CD8-positive, alpha-beta T cell (primary cell): ENCODE measurements at regions of chr10 and their contacts with region 1.

Region 1: DNA sequence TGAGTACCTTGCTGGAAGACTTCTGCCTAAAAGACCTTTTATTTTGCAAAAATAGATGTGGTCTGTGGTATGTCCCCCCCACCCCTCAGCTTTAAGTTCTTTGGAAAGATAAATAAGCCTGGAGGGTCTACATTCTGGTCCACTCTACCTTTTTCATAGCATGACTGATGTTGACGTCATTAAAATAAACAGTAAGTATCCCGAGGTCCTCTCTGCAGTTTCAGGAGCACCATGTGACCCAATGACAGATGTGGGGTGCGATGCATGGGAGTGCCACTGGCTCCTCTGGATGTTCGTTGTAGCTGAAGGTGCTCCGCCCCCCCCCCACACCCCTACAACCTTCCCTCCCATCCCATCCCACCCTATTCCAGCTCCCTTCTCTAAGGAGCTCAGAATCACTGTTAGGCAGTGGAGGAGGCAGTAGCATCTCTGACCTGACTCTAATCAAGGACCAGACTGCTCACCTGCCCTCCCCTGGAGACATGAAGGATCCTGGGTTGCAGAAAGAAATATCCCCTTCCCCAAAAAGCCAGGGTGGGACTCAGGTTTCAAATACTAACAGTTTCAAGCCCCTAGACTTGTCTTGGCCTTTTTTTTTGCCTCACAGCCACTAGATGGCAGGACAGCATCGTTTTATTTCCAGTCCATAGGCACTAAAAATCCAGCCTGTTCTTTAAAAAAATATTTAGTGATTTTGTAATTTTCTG is 25.1 kb downstream of the CASP7 start:
- DNase-seq: peak in 2 of 9 experiments; percentile 37 to 51
- ATAC-seq: no peak
- H3K4me3 ChIP-seq: no peak overlapping the region
- H3K4me3 Mint-ChIP-seq: no peak overlapping the region
- H3K27ac ChIP-seq: no peak overlapping the region
- H3K27ac Mint-ChIP-seq: no peak overlapping the region
- H3K4me1 ChIP-seq: no peaks in the 10 kb centered on the region
- H3K4me1 Mint-ChIP-seq: peaks cover 32% of the 10 kb centered on the region
- H3K27me3 ChIP-seq: no peaks in the 10 kb centered on the region
- H3K27me3 Mint-ChIP-seq: no peaks in the 10 kb centered on the region
- CTCF ChIP-seq: peak; percentile 50

Region 2: DNA sequence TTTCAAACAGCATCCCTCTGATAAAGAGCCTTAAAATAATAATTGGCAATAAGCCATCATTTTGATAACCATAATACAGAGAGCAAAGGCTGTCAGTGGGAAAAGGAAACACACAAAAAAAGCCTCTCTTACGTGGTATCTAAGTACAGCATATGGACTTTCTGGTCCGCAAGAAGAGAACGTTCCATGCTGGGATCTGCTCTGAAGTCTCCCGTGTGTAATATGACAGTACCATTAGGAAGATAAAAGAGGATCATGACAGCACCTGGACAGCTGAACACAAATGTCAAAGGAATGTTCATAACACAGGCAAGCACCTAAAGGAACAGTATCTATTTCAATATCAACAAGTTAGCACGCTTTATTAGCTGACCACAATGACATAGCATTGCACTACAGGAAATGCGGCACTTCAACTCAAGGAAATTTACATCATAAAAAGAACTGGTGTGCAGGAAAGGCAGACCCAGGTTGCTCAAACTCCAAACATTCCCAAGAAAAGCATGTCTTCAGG is 139.2 kb after region 1 on chr10:
- CTCF ChIA-PET with region 1: no interaction called
- POLR2A ChIA-PET with region 1: no interaction called
- intact Hi-C with region 1: loop called in 1 of 2 experiments (anchors 10 kb)
- DNase-seq: no peak
- ATAC-seq: no peak
- H3K4me3 ChIP-seq: no peak overlapping the region
- H3K4me3 Mint-ChIP-seq: no peak overlapping the region
- H3K27ac ChIP-seq: no peak overlapping the region
- H3K27ac Mint-ChIP-seq: no peak overlapping the region
- H3K4me1 ChIP-seq: no peaks in the 10 kb centered on the region
- H3K4me1 Mint-ChIP-seq: peaks cover 8% of the 10 kb centered on the region
- H3K27me3 ChIP-seq: no peaks in the 10 kb centered on the region
- H3K27me3 Mint-ChIP-seq: no peaks in the 10 kb centered on the region
- CTCF ChIP-seq: no peak

Region 3: GRCh38 chr10:114103284-114103683 is 398.5 kb after region 1 on chr10:
- CTCF ChIA-PET with region 1: interaction called, 8 read pairs
- POLR2A ChIA-PET with region 1: no interaction called
- intact Hi-C with region 1: loop called (anchors 1 to 2 kb)
- DNase-seq: peak in 2 of 9 experiments; percentile 51 to 63
- ATAC-seq: no peak
- H3K4me3 ChIP-seq: no peak overlapping the region
- H3K4me3 Mint-ChIP-seq: no peak overlapping the region
- H3K27ac ChIP-seq: no peak overlapping the region
- H3K27ac Mint-ChIP-seq: no peak overlapping the region
- H3K4me1 ChIP-seq: peaks cover 11% of the 10 kb centered on the region
- H3K4me1 Mint-ChIP-seq: peaks cover 29% of the 10 kb centered on the region
- H3K27me3 ChIP-seq: peaks cover 7 to 10% of the 10 kb centered on the region in 2 experiments
- H3K27me3 Mint-ChIP-seq: peaks cover 26% of the 10 kb centered on the region
- CTCF ChIP-seq: peak; percentile 56